ENCODE measurements at regions of chr5 and their contacts with region 1.

Region 1: GRCh38 chr5:73215891-73216610 is 43.1 kb downstream of the TMEM174 start:
- DNase-seq: peak; percentile 96
- H3K4me3 ChIP-seq: peak overlapping the region; percentile 49 to 66
- H3K27ac ChIP-seq: peak overlapping the region; percentile 47 to 69
- H3K4me1 ChIP-seq: peaks cover 9 to 16% of the 10 kb centered on the region in 2 experiments; a peak in 3 of 4 replicates
- H3K27me3 ChIP-seq: no peaks in the 10 kb centered on the region
- CTCF ChIP-seq: peak; percentile 76
- EP300 ChIP-seq: no peak
- RAD21 ChIP-seq: peak; percentile 58

Region 2: DNA sequence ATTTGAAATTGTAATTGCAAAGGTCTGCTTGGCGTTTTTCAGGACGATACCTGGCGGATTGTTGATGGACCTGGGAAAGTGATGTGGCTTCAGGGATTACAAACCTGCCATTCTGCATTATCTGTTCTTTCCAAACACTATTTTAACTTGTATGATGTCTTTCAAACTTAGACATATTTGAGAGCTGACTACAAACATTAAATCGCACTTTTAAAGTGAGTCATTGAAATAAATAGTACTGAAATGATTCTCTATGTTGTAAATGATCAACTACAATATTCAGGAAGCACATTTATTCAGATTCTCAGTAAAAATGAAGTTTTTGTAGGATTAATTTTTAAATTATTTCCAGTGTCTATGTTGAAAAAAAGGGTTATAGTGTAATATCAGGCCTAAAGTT is 128.0 kb before region 1 on chr5:
- CTCF ChIA-PET with region 1: interaction called, 16 read pairs
- POLR2A ChIA-PET with region 1: no interaction called
- DNase-seq: no peak
- H3K4me3 ChIP-seq: no peak overlapping the region
- H3K27ac ChIP-seq: no peak overlapping the region
- H3K4me1 ChIP-seq: peaks cover 0 to 5% of the 10 kb centered on the region in 2 experiments; a peak in 1 of 4 replicates
- H3K27me3 ChIP-seq: no peaks in the 10 kb centered on the region
- CTCF ChIP-seq: no peak
- EP300 ChIP-seq: no peak
- RAD21 ChIP-seq: no peak

Region 3: GRCh38 chr5:73189871-73190376 is 26.1 kb before region 1 on chr5:
- CTCF ChIA-PET with region 1: no interaction called
- POLR2A ChIA-PET with region 1: no interaction called
- DNase-seq: no peak
- H3K4me3 ChIP-seq: no peak overlapping the region
- H3K27ac ChIP-seq: peak overlapping the region; percentile 20 to 78; a peak in 2 of 4 replicates
- H3K4me1 ChIP-seq: peaks cover 5 to 8% of the 10 kb centered on the region in 2 experiments; a peak in 2 of 4 replicates
- H3K27me3 ChIP-seq: no peaks in the 10 kb centered on the region; the same call in 1 of the 2 replicates
- CTCF ChIP-seq: no peak
- EP300 ChIP-seq: no peak
- RAD21 ChIP-seq: no peak

Region 4: GRCh38 chr5:73233347-73234200 is 17.5 kb after region 1 on chr5:
- CTCF ChIA-PET with region 1: interaction called, 90 read pairs
- POLR2A ChIA-PET with region 1: no interaction called
- DNase-seq: peak; percentile 74
- H3K4me3 ChIP-seq: peak overlapping the region in 1 of 2 experiments; percentile 32; a peak in 1 of 4 replicates
- H3K27ac ChIP-seq: no peak overlapping the region
- H3K4me1 ChIP-seq: peaks cover 0 to 17% of the 10 kb centered on the region in 2 experiments; a peak in 2 of 4 replicates
- H3K27me3 ChIP-seq: no peaks in the 10 kb centered on the region
- CTCF ChIP-seq: peak; percentile 22; the same call in 1 of the 2 replicates
- EP300 ChIP-seq: no peak
- RAD21 ChIP-seq: no peak

Region 5: DNA sequence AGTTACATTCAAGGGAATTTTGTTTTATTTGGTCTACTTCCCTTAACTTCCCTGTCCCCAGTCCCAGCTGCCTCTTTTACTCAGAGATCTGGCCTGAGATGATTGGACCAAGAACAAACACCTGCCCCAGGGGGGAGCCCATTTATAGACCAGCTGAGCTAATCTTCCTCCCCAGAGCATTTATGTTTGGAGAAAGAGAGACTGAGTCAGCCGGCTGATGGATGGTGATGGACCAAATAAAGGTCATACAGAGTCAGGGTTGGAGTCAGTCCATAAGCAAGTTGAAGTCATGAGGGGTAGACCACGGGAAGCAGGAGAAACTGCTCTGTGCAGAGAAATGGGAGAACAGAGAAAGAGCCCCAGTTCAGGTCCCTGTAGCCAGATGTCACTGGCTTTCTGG is 34.6 kb after region 1 on chr5:
- CTCF ChIA-PET with region 1: interaction called, 12 read pairs
- POLR2A ChIA-PET with region 1: no interaction called
- DNase-seq: no peak
- H3K4me3 ChIP-seq: no peak overlapping the region
- H3K27ac ChIP-seq: no peak overlapping the region
- H3K4me1 ChIP-seq: no peaks in the 10 kb centered on the region
- H3K27me3 ChIP-seq: no peaks in the 10 kb centered on the region
- CTCF ChIP-seq: no peak
- EP300 ChIP-seq: no peak
- RAD21 ChIP-seq: no peak

Region 6: DNA sequence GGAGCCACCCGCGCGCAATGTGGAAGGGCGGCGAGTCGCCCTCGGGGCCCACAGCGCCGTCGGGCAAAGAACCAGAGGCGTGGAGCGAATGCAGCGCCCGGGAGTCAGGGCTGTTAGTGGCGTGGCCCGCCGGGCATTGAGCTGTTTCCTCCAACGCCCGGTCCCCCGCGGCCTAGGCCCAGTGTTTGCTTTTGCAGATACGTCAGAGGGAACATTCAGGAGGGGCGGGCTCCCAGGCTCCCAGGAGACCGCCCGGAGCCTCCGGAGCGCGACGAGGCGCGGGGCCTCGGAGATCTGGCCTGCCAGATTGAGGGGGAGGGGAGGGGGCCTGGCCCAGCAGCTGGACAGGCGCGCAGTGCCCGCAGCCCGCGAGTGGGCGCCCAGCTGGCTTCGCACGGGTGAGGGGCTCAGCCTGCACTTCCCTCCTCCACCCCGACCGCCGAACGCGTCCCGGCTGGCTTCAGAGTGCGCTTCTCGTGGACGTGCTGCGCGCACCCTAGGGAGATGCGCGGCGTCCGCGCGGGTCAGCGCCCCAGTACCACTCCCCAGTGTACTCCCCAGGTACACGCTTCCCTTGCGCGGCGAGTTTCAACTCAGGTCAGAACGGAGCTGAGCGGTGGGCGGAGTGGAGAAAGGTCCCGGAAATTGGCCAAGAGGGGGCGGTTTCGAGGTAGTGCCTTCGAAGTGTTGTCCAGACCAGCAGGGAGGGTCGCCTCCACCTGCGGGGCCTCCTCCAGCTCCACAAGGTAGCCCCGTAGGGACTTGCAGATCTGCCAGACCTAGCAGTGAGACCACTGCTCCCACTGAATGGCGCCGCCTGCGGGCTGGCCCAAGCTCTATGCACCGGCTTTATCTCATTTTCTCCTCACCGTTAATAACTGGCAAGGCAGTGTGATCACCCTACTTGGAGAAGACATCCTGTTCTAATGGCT is 87.4 kb after region 1 on chr5:
- CTCF ChIA-PET with region 1: interaction called, 14 read pairs
- POLR2A ChIA-PET with region 1: no interaction called
- DNase-seq: peak; percentile 49
- H3K4me3 ChIP-seq: no peak overlapping the region
- H3K27ac ChIP-seq: no peak overlapping the region
- H3K4me1 ChIP-seq: no peaks in the 10 kb centered on the region; a peak in 1 of 4 replicates
- H3K27me3 ChIP-seq: no peaks in the 10 kb centered on the region
- CTCF ChIP-seq: peak; percentile 18; the same call in 1 of the 2 replicates
- EP300 ChIP-seq: no peak
- RAD21 ChIP-seq: no peak

Region 7: DNA sequence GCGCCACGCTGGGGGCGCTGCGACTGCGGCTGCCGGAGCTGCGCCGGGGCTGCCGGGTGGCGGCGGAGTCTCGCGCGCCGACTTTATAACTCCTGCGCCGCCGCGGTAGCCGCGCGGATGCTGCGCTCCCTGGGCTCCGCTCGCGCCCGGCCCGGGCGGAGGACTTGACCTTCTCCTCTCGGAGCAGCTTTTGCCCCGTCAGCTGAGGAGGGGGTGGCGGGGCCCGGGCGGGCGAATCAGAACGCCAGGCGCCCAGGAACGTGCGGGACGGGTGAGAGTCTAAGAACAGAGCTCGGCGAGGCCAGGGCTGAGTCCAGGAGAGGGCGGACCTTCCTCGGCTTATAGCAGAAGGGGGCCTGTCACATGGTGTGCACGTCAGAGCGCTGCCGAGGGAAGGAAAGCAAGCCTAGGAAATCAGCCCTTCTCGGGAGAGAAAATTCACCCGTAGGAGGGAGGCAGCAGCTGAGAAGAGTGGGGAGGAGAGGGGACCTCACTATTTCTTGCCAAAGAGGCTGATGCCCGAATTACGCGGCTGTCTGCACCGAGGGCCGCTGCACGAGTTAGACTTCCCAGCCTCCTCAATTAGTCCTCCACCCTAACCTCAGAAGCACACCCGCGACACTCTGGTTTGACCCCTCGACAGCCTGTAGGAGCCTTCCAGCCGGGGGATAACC is 232.5 kb after region 1 on chr5 and contains the start of gene FOXD1:
- CTCF ChIA-PET with region 1: interaction called, 42 read pairs
- POLR2A ChIA-PET with region 1: no interaction called
- DNase-seq: peak; percentile 80
- H3K4me3 ChIP-seq: peak within 1 kb of the TSS; percentile 69 to 74
- H3K27ac ChIP-seq: peak within 1 kb of the TSS; percentile 74 to 93
- H3K4me1 ChIP-seq: peaks cover 10 to 12% of the 10 kb centered on the region in 2 experiments; a peak in 1 of 4 replicates
- H3K27me3 ChIP-seq: no peaks in the 10 kb centered on the region
- CTCF ChIP-seq: no peak
- EP300 ChIP-seq: peak in 1 of 2 experiments; percentile 66; a peak in 1 of 4 replicates
- RAD21 ChIP-seq: no peak
- polyA plus RNA-seq, gene FOXD1: 39.6 and 73.9 TPM in 2 replicates

Region 8: GRCh38 chr5:73701518-73701917 is 485.5 kb after region 1 on chr5:
- CTCF ChIA-PET with region 1: no interaction called
- POLR2A ChIA-PET with region 1: no interaction called
- DNase-seq: no peak
- H3K4me3 ChIP-seq: no peak overlapping the region
- H3K27ac ChIP-seq: no peak overlapping the region
- H3K4me1 ChIP-seq: no peaks in the 10 kb centered on the region; a peak in 2 of 4 replicates
- H3K27me3 ChIP-seq: no peaks in the 10 kb centered on the region
- CTCF ChIP-seq: no peak
- EP300 ChIP-seq: no peak
- RAD21 ChIP-seq: no peak

Region 9: GRCh38 chr5:73853091-73853490 is 637.0 kb after region 1 on chr5:
- CTCF ChIA-PET with region 1: no interaction called
- POLR2A ChIA-PET with region 1: no interaction called
- DNase-seq: no peak
- H3K4me3 ChIP-seq: no peak overlapping the region
- H3K27ac ChIP-seq: no peak overlapping the region
- H3K4me1 ChIP-seq: peaks cover 0 to 7% of the 10 kb centered on the region in 2 experiments; a peak in 1 of 4 replicates
- H3K27me3 ChIP-seq: no peaks in the 10 kb centered on the region
- CTCF ChIP-seq: no peak
- EP300 ChIP-seq: no peak
- RAD21 ChIP-seq: no peak